ENCODE measurements at regions of chr9 and their contacts with region 1.

Region 1: GRCh38 chr9:126781186-126782052 is 23.4 kb upstream of the ZBTB43 start:
- DNase-seq: peak; percentile 82 to 83
- H3K4me3 ChIP-seq: no peak overlapping the region
- H3K27ac ChIP-seq: no peak overlapping the region
- H3K4me1 ChIP-seq: peaks cover 0 to 4% of the 10 kb centered on the region in 2 donors
- H3K27me3 ChIP-seq: no peaks in the 10 kb centered on the region
- CTCF ChIP-seq: peak; percentile 87 to 95 (median 92)
- POLR2A ChIP-seq: no peak

Region 2: DNA sequence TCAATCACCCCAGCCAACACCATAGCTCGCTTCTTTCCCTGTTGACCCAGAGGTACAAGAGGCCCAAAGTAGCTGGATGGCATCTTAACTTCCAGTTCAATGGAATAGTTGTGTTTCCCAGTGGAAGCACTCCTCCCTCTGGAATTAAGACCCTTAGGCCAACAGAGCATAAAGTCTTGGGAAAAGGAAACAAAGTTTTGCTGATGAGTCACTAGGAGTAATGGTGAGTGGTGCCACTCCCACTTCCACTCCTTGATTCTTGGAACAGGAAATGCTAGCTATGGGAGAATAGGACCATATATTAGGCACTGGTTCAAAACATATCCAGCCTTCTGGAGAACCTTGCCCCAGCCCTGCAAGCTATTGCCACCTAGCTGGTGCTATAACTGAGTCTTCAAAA is 212.4 kb before region 1 on chr9:
- intact Hi-C with region 1: no loop called
- DNase-seq: no peak
- H3K4me3 ChIP-seq: no peak overlapping the region
- H3K27ac ChIP-seq: no peak overlapping the region
- H3K4me1 ChIP-seq: no peaks in the 10 kb centered on the region
- H3K27me3 ChIP-seq: no peaks in the 10 kb centered on the region
- CTCF ChIP-seq: no peak
- POLR2A ChIP-seq: no peak

Region 3: DNA sequence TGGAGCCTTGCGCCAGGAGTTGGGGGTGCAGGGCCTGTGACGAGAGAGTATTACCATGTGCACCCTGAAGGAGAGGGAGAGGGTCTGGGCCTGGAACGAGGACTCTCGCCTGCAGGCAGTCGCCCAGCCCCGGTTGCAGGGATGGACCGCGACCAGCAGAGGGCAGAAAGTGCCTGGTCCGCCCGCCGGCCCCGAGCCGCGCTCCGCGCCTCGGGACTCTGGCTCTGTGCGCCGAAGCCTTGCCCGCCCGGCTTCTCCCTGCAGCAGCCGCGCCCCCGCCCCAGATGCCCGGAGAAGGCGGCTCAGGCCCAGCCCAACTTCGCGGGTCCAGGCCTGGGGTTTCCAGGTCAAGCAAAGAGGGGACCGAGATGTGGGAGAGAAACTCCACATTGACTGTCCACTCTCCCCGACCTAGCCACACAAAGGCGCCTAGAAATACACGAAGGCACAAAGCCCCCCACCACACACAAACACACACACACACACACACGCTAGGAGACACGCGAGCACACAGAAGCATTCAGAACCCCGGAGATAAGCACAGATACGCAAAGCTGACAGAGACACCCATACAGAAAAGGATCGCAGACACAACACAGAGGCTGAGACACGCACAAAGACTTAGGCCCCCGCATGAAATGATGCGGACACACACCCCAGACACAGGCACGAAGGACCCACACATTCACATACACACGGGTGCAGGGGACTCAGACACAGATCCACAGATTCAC is 169.7 kb before region 1 on chr9:
- intact Hi-C with region 1: loop called (anchors 10 kb)
- DNase-seq: peak; percentile 74
- H3K4me3 ChIP-seq: peak overlapping the region in 1 of 3 donors; percentile 45
- H3K27ac ChIP-seq: no peak overlapping the region
- H3K4me1 ChIP-seq: peaks cover 13 to 57% of the 10 kb centered on the region in 2 donors
- H3K27me3 ChIP-seq: no peaks in the 10 kb centered on the region
- CTCF ChIP-seq: peak; percentile 45 to 93 (median 64)
- POLR2A ChIP-seq: peak in 1 of 2 donors; percentile 7

Region 4: DNA sequence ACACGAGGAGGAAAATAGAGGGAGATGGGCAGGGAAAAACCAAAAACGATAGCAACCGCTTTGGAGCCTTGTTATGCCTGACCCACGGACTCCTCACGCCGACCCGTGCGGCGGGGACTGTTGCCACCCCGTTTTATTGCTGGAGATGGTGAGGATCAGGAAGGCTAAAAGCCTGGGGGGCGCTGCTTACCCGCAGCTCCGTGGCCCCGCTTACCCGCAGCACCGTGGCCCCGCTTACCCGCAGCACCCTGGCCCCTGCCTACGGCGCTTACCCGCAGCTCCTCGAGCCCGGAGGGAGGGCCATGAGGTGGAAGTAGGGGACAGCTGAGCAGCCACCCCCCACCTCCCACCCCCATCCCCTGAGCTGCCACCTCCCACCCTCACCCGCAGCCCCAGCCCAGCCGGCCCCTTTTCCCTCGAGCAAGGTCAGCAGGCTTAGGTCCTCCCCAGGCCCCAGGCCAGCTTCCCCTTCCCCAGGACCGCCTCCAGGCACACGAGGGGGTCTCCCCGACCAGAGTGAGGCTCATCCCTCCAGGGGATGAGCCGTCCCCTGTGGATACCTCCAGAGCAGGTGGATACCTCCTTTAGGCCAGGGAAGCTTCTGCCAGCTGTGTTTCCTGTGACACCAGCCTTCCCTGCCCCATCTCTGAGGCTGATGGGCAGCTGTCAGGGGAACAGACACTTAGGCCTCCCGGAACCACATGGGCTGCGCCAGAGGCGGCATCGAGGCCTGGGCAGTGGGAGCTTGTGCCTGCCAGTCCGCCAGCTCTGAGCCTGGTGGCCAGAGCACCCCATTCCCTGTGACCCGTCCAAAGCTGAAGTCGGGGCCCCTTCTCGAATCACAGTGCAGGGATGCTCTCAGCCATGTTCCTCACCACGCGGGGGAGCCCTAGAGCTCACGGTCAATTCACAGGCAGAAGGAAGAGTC is 75.4 kb before region 1 on chr9:
- intact Hi-C with region 1: loop called (anchors 2 kb)
- DNase-seq: peak; percentile 25 to 30
- H3K4me3 ChIP-seq: no peak overlapping the region
- H3K27ac ChIP-seq: no peak overlapping the region
- H3K4me1 ChIP-seq: peaks cover 0 to 8% of the 10 kb centered on the region in 2 donors
- H3K27me3 ChIP-seq: no peaks in the 10 kb centered on the region
- CTCF ChIP-seq: peak in 4 of 6 experiments; percentile 27 to 43 (median 34)
- POLR2A ChIP-seq: no peak

Measured in thyroid gland (tissue), 4 donors.